ENCODE measurements at regions of chr14 and their contacts with region 1.

Region 1: GRCh38 chr14:93115069-93115820 is 480 bp downstream of the ITPK1 start:
- DNase-seq: peak; percentile 91 to 94 (median 92)
- ATAC-seq: peak; percentile 79 to 95 (median 90)
- H3K4me3 ChIP-seq: peak overlapping the region; percentile 73 to 96 (median 88)
- H3K27ac ChIP-seq: peak overlapping the region; percentile 95 to 99 (median 98)
- H3K4me1 ChIP-seq: peaks cover 0 to 52% (median 32%) of the 10 kb centered on the region in 12 donors
- H3K27me3 ChIP-seq: no peaks in the 10 kb centered on the region
- CTCF ChIP-seq: peak in 3 of 12 donors; percentile 1 to 32 (median 18)
- POLR2A ChIP-seq: peak in 1 of 2 donors; percentile 74

Region 2: DNA sequence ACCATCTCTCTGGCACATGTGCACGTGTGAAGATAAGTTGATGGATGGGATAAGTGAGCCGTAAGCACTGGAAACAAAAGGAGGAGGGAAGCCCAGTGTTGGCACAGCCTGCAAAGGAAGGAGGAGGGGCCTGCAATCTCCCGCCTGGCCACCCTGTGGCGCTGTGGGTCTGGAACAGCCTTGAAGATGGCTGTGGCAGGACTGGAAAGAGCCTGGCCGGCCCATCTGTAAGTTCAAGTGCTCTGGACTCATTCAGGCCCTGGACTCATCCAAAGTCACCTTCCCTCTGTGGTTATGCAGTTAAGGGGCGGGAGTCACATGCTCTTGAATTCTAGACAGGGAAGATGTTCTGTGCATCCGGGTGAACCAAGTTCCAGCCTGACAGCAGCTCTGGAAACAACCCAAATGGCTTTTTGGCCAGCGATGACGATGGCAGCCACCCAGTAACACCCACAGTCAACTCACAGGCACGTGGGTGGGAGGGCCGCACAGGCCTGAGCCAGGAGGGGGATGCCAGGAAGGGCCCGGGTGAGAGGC is 141.9 kb before region 1 on chr14:
- intact Hi-C with region 1: loop called in 6 of 10 experiments (anchors 1 to 5 kb)
- DNase-seq: peak; percentile 79 to 89 (median 84)
- ATAC-seq: peak; percentile 91 to 95 (median 92)
- H3K4me3 ChIP-seq: no peak overlapping the region
- H3K27ac ChIP-seq: peak overlapping the region; percentile 10 to 90 (median 80)
- H3K4me1 ChIP-seq: peaks cover 0 to 45% (median 19%) of the 10 kb centered on the region in 12 donors
- H3K27me3 ChIP-seq: no peaks in the 10 kb centered on the region
- CTCF ChIP-seq: peak; percentile 52 to 87 (median 72)
- POLR2A ChIP-seq: no peak

Region 3: DNA sequence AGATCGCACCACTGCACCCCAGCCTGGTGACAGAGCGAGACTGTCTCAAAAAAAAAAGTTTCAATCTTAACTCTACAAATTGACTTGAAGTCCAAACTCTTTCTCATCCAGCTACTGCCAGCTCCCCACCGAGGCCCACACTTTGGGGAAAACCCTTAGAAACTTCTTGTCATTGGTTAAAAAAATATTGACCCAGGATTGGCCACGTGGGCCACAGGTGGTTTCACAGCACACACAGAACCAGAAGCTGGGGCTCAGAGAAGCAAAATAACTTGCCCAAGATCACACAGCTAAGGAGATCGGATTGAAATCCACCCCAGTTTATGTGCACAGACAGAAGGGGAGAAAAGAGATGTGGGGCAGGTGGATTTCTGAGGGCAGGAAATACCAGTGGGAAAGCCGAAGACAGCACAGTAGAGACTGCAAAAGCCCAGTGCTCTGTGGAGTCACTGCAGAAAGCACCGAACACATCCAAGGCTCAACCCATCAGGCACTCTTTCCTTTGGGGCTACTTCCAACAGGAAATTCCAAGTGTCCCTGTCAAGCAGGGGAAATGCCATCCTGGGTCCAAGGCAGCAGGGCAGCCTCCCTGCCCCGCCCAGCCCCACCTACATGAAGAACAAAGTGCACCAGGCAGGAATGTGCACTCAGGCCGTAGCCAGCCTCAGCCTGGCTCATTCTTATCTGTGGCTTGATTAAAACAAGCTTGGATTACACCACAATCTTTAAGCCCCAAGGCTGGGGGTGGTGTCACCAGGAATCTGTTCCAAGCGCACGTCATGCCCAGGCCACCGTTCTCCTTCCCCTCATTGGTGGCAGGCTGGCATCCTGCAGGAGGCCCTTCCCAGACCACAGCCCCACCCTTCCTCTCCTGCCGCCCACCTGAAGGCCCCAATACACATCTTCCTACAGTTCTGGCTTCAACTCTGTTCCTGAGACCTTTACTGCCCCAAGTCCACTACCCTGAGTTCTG is 72.0 kb before region 1 on chr14:
- intact Hi-C with region 1: loop called in 3 of 10 experiments (anchors 5 to 10 kb)
- DNase-seq: peak; percentile 72 to 91 (median 78)
- ATAC-seq: peak; percentile 72 to 84 (median 79)
- H3K4me3 ChIP-seq: no peak overlapping the region
- H3K27ac ChIP-seq: peak overlapping the region; percentile 43 to 96 (median 81)
- H3K4me1 ChIP-seq: peaks cover 8 to 94% (median 79%) of the 10 kb centered on the region in 12 donors
- H3K27me3 ChIP-seq: no peaks in the 10 kb centered on the region
- CTCF ChIP-seq: no peak
- POLR2A ChIP-seq: no peak

Region 4: GRCh38 chr14:93132470-93133065 is 17.3 kb after region 1 on chr14:
- intact Hi-C with region 1: loop called in 1 of 10 experiments (anchors 1 kb)
- DNase-seq: peak in 3 of 5 donors; percentile 45 to 54 (median 46)
- ATAC-seq: peak; percentile 46 to 88 (median 76)
- H3K4me3 ChIP-seq: no peak overlapping the region
- H3K27ac ChIP-seq: peak overlapping the region in 6 of 12 donors; percentile 10 to 49 (median 34)
- H3K4me1 ChIP-seq: peaks cover 0 to 24% (median 0%) of the 10 kb centered on the region in 12 donors
- H3K27me3 ChIP-seq: no peaks in the 10 kb centered on the region
- CTCF ChIP-seq: peak; percentile 28 to 61 (median 51)
- POLR2A ChIP-seq: no peak

Region 5: DNA sequence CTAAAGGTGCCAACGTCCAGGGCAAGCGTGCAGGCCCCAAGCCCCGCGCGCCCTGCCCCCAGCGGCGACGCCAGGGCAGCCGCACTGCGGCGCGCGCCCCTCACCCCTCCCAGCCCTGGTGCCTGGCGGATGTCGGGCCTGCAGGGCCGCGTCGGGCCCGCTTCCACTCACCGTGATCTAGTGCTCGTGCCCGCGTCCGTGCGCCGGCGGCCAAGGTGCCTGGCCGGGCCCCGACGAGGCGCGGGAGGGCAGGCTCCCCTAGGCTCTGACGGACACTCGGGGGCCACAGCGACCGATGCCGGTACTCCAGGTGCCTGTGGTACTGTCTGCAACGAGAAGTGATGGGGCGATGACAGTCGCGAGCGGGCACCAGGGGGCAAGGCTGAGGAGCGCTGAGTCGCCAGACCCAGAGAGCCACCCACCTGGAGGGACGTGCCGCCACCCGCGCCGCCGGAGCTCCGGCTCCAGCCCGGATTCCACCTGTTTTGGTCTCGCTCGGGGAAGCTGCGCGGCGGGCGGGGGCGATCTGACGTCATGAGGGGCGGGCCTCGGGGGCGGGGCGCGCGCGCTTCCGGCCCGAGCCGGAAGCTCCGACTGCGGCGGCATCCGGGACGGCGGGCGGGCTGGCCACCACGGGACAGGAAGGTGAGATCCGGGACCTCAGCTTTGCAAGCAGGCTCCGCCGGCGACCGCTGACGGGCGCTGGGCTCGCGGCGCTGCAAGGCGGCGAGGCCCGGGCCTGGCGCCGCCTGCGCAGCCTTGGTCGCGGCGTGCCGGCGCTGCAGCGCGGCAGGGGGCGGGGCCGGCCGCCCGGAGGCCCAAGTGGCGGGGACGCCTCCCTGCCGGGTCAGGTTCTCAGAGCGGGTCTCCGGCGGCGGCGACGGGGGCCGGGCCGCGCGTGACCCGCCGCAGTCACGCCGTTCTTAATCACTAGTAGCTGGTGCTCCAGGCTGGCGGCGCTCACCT is 69.4 kb after region 1 on chr14 and contains the starts of genes LYSET and MOAP1:
- intact Hi-C with region 1: loop called in 1 of 10 experiments (anchors 5 kb)
- DNase-seq: peak; percentile 90 to 95 (median 91)
- ATAC-seq: peak; percentile 79 to 96 (median 95)
- H3K4me3 ChIP-seq: peak within 1 kb of the TSS; percentile 68 to 100 (median 96)
- H3K27ac ChIP-seq: peak within 1 kb of the TSS; percentile 76 to 98 (median 96)
- H3K4me1 ChIP-seq: peaks cover 0 to 37% (median 23%) of the 10 kb centered on the region in 12 donors
- H3K27me3 ChIP-seq: no peaks in the 10 kb centered on the region
- CTCF ChIP-seq: peak in 6 of 12 donors; percentile 16 to 42 (median 34)
- POLR2A ChIP-seq: peak in 1 of 2 donors; percentile 81
- total RNA-seq, gene LYSET: 8.8 to 29.3 (median 22.8) TPM
- total RNA-seq, gene MOAP1: 45.7 to 87.0 (median 56.8) TPM